ENCODE measurements at regions of chr19 and their contacts with region 1.

Region 1: DNA sequence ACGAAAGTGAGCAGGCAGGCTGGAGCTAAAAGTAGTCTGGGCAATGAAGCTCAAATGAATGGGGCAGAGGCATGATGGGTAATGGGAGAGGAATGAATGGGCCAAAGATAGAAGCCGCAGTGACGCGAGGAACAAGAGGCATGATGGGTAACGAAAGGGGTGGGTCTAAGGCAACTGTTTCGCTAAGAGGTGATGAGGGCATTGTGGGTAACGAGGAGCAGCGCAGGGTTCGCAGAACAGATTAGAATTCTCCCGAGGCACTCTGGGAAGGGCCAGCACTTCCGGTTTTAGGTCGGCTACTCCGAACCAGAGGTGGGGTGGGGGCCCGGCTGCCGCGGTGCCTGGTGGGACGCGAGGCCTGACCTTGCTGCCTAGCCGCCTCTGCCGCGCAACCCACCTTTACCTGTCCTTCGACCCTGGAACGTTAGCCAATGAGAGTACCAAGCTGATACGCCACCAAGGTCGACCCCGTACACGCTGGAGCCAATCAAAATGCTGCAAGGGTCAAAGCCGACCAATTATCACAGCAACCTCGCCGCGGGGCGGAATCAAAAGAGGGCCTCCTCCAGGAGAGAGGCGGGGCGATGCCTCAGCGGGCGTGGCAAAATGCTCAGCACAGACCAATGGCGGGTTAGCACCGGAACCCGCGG is 563 bp upstream of the TOMM40 start:
- DNase-seq: peak; percentile 100
- H3K4me3 ChIP-seq: peak overlapping the region in 2 of 3 experiments; percentile 44 to 61
- H3K27ac ChIP-seq: peak overlapping the region; percentile 65
- H3K4me1 ChIP-seq: peaks cover 16% of the 10 kb centered on the region
- H3K27me3 ChIP-seq: no peaks in the 10 kb centered on the region
- CTCF ChIP-seq: no peak
- POLR2A ChIP-seq: peak; percentile 91

Region 2: GRCh38 chr19:44718441-44719261 is 171.8 kb before region 1 on chr19:
- CTCF ChIA-PET with region 1: interaction called, 5 read pairs
- POLR2A ChIA-PET with region 1: no interaction called
- dilution Hi-C with region 1: no loop called
- intact Hi-C with region 1: loop called (anchors 2 kb)
- DNase-seq: peak; percentile 98
- H3K4me3 ChIP-seq: peak overlapping the region; percentile 11 to 72 (median 26)
- H3K27ac ChIP-seq: peak overlapping the region; percentile 100
- H3K4me1 ChIP-seq: peaks cover 38% of the 10 kb centered on the region
- H3K27me3 ChIP-seq: no peaks in the 10 kb centered on the region
- CTCF ChIP-seq: no peak
- POLR2A ChIP-seq: no peak

Region 3: GRCh38 chr19:44869733-44870470 is 20.6 kb before region 1 on chr19:
- CTCF ChIA-PET with region 1: no interaction called
- POLR2A ChIA-PET with region 1: no interaction called
- dilution Hi-C with region 1: no loop called
- intact Hi-C with region 1: loop called (anchors 2 kb)
- DNase-seq: peak; percentile 75
- H3K4me3 ChIP-seq: no peak overlapping the region
- H3K27ac ChIP-seq: peak overlapping the region; percentile 36
- H3K4me1 ChIP-seq: peaks cover 26% of the 10 kb centered on the region
- H3K27me3 ChIP-seq: no peaks in the 10 kb centered on the region
- CTCF ChIP-seq: no peak
- POLR2A ChIP-seq: no peak

Region 4: DNA sequence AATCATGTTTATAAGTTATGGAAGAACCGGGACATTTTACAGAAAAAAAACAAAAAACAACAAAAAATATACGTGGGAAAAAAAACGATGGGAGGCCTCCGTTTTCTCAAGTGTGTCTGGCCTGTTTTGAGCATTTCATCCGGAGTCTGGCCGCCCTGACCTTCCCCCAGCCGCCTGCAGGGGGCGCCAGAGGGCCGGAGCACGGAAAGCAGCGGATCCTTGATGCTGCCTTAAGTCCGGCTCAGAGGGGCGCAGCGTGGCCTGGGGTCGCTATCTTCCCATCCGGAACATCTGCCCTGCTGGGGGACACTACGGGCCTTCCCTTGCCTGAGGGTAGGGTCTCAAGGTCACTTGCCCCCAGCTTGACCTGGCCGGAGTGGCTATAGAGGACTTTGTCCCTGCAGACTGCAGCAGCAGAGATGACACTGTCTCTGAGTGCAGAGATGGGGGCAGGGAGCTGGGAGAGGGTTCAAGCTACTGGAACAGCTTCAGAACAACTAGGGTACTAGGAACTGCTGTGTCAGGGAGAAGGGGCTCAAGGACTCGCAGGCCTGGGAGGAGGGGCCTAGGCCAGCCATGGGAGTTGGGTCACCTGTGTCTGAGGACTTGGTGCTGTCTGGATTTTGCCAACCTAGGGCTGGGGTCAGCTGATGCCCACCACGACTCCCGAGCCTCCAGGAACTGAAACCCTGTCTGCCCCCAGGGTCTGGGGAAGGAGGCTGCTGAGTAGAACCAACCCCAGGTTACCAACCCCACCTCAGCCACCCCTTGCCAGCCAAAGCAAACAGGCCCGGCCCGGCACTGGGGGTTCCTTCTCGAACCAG is 13.3 kb after region 1 on chr19:
- CTCF ChIA-PET with region 1: interaction called, 5 read pairs
- POLR2A ChIA-PET with region 1: no interaction called
- dilution Hi-C with region 1: no loop called
- intact Hi-C with region 1: loop called (anchors 1 kb)
- DNase-seq: peak; percentile 73
- H3K4me3 ChIP-seq: no peak overlapping the region
- H3K27ac ChIP-seq: no peak overlapping the region
- H3K4me1 ChIP-seq: peaks cover 5% of the 10 kb centered on the region
- H3K27me3 ChIP-seq: peaks cover 9 to 11% of the 10 kb centered on the region in 2 experiments
- CTCF ChIP-seq: peak; percentile 98 to 99
- POLR2A ChIP-seq: peak; percentile 7

Measured in endothelial cell of umbilical vein (primary cell).